ENCODE measurements at regions of chr18 and their contacts with region 1.

Region 1: GRCh38 chr18:51621113-51621863 is 423.8 kb upstream of the MEX3C start:
- DNase-seq: no peak
- H3K4me3 ChIP-seq: no peak overlapping the region
- CTCF ChIP-seq: peak; percentile 83

Region 2: DNA sequence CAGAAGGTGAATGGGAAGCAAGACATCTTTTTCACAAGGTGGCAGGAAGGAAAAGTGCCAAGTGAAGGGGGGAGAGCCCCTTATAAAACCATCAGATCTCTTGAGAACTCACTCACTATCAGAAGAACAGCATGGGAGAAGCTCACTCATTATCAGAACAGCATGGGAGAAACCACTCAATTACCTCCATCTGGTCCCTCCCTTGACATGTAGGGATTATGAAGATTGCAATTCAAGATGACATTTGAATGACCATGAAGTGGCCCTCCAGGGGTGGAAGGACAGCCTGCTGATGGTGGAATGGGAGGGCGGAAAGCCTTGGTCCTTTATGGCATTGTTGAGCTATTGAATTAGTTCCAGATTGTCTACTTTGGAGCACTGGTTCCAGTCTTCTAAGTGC is 10.8 kb before region 1 on chr18:
- CTCF ChIA-PET with region 1: interaction called, 11 read pairs
- POLR2A ChIA-PET with region 1: no interaction called
- DNase-seq: no peak
- H3K4me3 ChIP-seq: no peak overlapping the region
- CTCF ChIP-seq: no peak

Measured in AG04449 (cell line).